Caco-2 (cell line): ENCODE measurements at regions of chr1 and their contacts with region 1.

Region 1: GRCh38 chr1:235404195-235404594 is 37.0 kb downstream of the TBCE start:
- DNase-seq: no peak
- H3K4me3 ChIP-seq: no peak overlapping the region
- H3K4me3 Mint-ChIP-seq: no peak overlapping the region
- H3K27ac Mint-ChIP-seq: no peak overlapping the region
- H3K4me1 ChIP-seq: peaks cover 20% of the 10 kb centered on the region
- H3K4me1 Mint-ChIP-seq: peaks cover 24% of the 10 kb centered on the region
- H3K27me3 ChIP-seq: no peaks in the 10 kb centered on the region
- H3K27me3 Mint-ChIP-seq: no peaks in the 10 kb centered on the region
- CTCF ChIP-seq: no peak

Region 2: DNA sequence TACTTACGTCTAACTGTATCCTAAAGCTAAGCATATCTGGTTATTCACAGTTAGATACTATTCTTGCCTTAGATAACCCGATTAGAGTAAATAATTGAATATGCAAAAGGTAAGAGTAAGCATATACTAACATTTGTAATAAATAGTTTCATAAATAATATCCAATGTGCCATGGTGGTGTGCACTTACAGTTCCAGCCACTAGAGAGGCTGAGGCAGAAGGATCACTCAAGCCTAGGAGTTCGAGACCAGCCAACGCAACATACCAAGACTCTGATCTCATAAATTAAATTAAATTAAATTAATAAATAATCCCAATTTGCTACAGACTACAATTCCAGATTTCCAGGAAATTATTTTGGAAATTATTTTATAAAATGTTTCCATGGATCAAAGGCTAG is 88.5 kb before region 1 on chr1:
- CTCF ChIA-PET with region 1: no interaction called
- POLR2A ChIA-PET with region 1: interaction called, 16 read pairs
- intact Hi-C with region 1: no loop called
- DNase-seq: no peak
- H3K4me3 ChIP-seq: no peak overlapping the region
- H3K4me3 Mint-ChIP-seq: no peak overlapping the region
- H3K27ac Mint-ChIP-seq: no peak overlapping the region
- H3K4me1 ChIP-seq: no peaks in the 10 kb centered on the region
- H3K4me1 Mint-ChIP-seq: no peaks in the 10 kb centered on the region
- H3K27me3 ChIP-seq: no peaks in the 10 kb centered on the region
- H3K27me3 Mint-ChIP-seq: no peaks in the 10 kb centered on the region
- CTCF ChIP-seq: no peak

Region 3: GRCh38 chr1:235367000-235367908 is 36.9 kb before region 1 on chr1 and contains the start of gene TBCE:
- CTCF ChIA-PET with region 1: interaction called, 3 read pairs
- POLR2A ChIA-PET with region 1: no interaction called
- intact Hi-C with region 1: loop called (anchors 1 kb)
- DNase-seq: peak; percentile 99
- H3K4me3 ChIP-seq: peak within 1 kb of the TSS; percentile 62
- H3K4me3 Mint-ChIP-seq: peak within 1 kb of the TSS; percentile 99
- H3K27ac Mint-ChIP-seq: peak within 1 kb of the TSS; percentile 98
- H3K4me1 ChIP-seq: peaks cover 12% of the 10 kb centered on the region; the same call in 1 of the 2 replicates
- H3K4me1 Mint-ChIP-seq: peaks cover 22% of the 10 kb centered on the region
- H3K27me3 ChIP-seq: no peaks in the 10 kb centered on the region
- H3K27me3 Mint-ChIP-seq: no peaks in the 10 kb centered on the region
- CTCF ChIP-seq: no peak
- total RNA-seq, gene TBCE: 38.5 and 40.0 TPM in 2 replicates

Region 4: GRCh38 chr1:235455823-235456222 is 51.6 kb after region 1 on chr1:
- CTCF ChIA-PET with region 1: no interaction called
- POLR2A ChIA-PET with region 1: no interaction called
- intact Hi-C with region 1: no loop called
- DNase-seq: no peak
- H3K4me3 ChIP-seq: no peak overlapping the region
- H3K4me3 Mint-ChIP-seq: no peak overlapping the region
- H3K27ac Mint-ChIP-seq: no peak overlapping the region
- H3K4me1 ChIP-seq: no peaks in the 10 kb centered on the region
- H3K4me1 Mint-ChIP-seq: no peaks in the 10 kb centered on the region
- H3K27me3 ChIP-seq: no peaks in the 10 kb centered on the region
- H3K27me3 Mint-ChIP-seq: no peaks in the 10 kb centered on the region
- CTCF ChIP-seq: no peak